HEK293T (cell line): ENCODE measurements at regions of chr1 and their contacts with region 1.

Region 1: GRCh38 chr1:51247022-51247421 is 10.9 kb downstream of the RNF11 start:
- DNase-seq: no peak

Region 2: GRCh38 chr1:51235673-51236530 is 11.1 kb before region 1 on chr1 and contains the start of gene RNF11:
- CTCF ChIA-PET with region 1: interaction called, 3 read pairs
- POLR2A ChIA-PET with region 1: interaction called, 17 read pairs
- DNase-seq: peak; percentile 94

Region 3: GRCh38 chr1:51472359-51472758 is 225.3 kb after region 1 on chr1:
- CTCF ChIA-PET with region 1: no interaction called
- POLR2A ChIA-PET with region 1: no interaction called
- DNase-seq: no peak